ENCODE measurements at regions of chr21 and their contacts with region 1.

Region 1: DNA sequence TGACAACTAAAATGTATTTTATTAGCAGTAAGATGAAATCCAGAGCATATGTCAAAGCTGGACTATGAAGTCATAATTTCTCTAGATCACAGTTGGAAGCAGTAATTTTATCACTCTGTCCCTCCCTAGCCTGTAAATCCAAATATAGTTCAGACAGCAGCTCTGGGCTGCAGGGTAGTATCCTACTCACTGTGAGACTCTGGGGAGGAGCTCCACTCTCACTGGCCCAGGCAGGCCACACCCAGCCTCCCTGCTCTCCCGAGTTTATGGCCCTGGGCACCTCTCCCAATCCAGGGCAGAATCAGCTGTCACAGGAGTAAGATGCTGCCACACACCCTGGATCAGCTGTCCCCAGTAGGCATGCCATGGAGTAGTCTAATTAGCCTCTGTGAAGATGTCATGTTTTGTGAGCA is 131.1 kb downstream of the HLCS start:
- DNase-seq: no peak
- ATAC-seq: no peak
- H3K4me3 ChIP-seq: no peak overlapping the region
- H3K27ac ChIP-seq: no peak overlapping the region
- H3K4me1 ChIP-seq: no peaks in the 10 kb centered on the region
- H3K27me3 ChIP-seq: no peaks in the 10 kb centered on the region
- CTCF ChIP-seq: no peak
- POLR2A ChIP-seq: no peak

Region 2: GRCh38 chr21:36113647-36114428 is 721.6 kb before region 1 on chr21:
- intact Hi-C with region 1: no loop called
- DNase-seq: peak in 2 of 4 donors; percentile 30 to 49
- ATAC-seq: no peak
- H3K4me3 ChIP-seq: no peak overlapping the region
- H3K27ac ChIP-seq: no peak overlapping the region
- H3K4me1 ChIP-seq: peaks cover 5% of the 10 kb centered on the region
- H3K27me3 ChIP-seq: no peaks in the 10 kb centered on the region
- CTCF ChIP-seq: no peak
- POLR2A ChIP-seq: no peak

Region 3: DNA sequence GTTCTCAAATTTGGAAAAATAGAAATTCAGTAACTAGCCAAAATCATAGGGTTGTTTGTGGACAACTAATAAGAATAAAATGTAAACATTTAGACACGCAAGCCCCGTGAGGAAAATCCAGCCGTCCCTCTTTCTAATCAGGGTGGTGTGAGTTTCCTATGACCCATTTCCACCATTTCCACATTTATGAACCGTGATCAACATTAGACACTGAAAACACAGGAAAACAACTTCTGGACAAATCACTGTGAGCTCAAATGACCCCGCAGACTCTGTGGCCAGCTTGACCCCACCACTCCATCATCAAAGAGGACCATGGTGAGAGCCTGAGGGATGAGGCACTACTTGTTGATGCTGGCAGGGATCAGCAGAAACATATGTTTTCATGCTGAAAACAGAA is 35.5 kb before region 1 on chr21:
- intact Hi-C with region 1: loop called (anchors 5 kb)
- DNase-seq: no peak
- ATAC-seq: no peak
- H3K4me3 ChIP-seq: no peak overlapping the region
- H3K27ac ChIP-seq: no peak overlapping the region
- H3K4me1 ChIP-seq: no peaks in the 10 kb centered on the region
- H3K27me3 ChIP-seq: no peaks in the 10 kb centered on the region
- CTCF ChIP-seq: no peak
- POLR2A ChIP-seq: no peak

Measured in body of pancreas (tissue), 4 donors.